ENCODE measurements at regions of chr10 and their contacts with region 1.

Region 1: DNA sequence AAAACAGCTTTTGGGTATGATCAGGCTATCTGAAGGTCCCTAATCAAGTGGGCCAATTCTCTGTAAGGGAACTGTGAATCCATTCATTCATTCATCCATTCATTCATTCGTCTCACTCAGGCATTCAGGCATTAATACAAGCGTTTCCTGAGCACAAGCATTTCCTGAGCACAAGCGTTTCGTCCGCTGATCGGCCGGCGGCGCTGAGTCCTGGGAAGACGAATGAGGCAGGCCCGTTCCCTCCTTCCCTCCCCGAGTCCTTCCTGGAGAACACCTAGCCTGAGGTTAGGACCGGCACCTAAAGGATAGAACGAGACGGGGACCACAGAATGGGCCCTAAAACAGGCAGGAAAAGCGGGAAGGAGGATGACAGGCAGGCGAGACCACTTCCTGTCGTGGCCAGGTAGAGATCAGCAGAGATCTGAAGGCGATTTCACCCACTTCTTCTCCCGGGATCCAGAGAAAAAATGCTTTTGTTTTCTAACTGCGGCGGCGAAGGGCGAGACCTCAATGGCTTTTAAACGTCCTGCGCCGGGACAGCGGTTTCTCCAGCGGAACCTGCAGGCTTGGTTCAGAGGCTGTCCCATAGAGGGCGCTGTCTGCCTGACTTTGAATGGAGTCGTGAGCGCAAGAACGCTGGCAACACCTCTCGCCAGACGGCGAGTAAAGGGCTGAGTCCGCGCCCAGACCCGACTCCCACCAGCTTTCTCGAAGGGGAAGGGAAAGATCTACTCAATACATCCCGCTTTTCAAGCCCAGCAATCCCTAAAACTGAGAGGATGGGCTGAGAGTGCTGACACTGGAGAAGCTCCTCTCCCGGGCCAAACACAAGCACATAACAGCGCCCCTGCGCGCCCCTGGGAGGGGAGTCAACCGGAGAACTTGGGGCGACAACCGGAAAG is 2.9 kb upstream of the HMX3 start:
- DNase-seq: peak; percentile 91
- H3K4me3 ChIP-seq: peak overlapping the region in 1 of 4 donors; percentile 17
- H3K27ac ChIP-seq: no peak overlapping the region
- H3K4me1 ChIP-seq: peaks cover 0 to 53% (median 50%) of the 10 kb centered on the region in 4 donors
- H3K27me3 ChIP-seq: peaks cover 48 to 94% (median 67%) of the 10 kb centered on the region in 3 donors
- CTCF ChIP-seq: peak; percentile 53 to 89 (median 84)
- EP300 ChIP-seq: no peak
- POLR2A ChIP-seq: no peak

Region 2: DNA sequence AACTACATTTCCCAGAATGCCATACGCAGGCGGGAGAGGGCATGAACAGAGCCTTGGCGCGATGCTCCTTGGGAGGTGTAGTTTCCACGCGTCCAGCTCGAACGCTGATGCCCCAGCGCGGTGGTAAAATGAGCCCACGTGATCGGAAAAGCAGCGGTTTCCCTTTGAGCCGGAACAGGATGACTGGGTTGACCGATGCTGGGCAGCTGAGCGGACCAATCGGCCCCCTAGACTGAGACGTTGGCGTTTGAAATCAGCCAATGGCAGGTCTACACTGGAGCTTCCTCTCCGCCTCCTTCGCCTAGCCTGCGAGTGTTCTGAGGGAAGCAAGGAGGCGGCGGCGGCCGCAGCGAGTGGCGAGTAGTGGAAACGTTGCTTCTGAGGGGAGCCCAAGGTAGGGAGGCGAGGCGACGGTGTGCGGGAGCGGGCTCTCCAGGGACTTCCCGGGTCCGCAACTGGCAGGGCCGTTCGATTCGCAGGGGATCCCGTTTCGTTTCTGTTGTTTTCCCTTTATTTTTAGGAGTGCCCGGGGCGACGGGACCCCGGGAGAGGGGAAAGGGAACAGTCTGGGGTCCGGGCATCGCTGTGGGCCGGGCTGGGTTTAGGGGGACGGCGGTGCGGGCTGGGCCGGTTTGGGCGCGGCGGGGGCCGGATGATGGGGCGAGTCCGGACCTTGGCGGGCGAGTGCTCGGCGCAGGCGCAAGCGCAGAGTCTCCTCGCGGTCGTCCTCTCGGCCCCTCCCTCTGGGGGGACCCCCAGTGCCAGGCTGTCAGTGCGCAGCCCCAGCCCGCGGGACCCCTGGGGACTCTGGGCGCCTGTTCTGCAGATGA is 21.5 kb after region 1 on chr10 and contains the start of gene BUB3:
- intact Hi-C with region 1: loop called (anchors 2 kb)
- DNase-seq: peak; percentile 99
- H3K4me3 ChIP-seq: peak within 1 kb of the TSS; percentile 90 to 99 (median 99)
- H3K27ac ChIP-seq: peak within 1 kb of the TSS; percentile 93 to 96 (median 94)
- H3K4me1 ChIP-seq: peaks cover 0 to 45% (median 36%) of the 10 kb centered on the region in 4 donors
- H3K27me3 ChIP-seq: peaks cover 23 to 43% (median 38%) of the 10 kb centered on the region in 3 donors
- CTCF ChIP-seq: peak in 2 of 4 experiments; percentile 19 to 20
- EP300 ChIP-seq: no peak
- POLR2A ChIP-seq: peak; percentile 68 to 82
- total RNA-seq, gene BUB3: 75.6 to 116 (median 101) TPM

Region 3: GRCh38 chr10:123204135-123204478 is 71.3 kb after region 1 on chr10:
- intact Hi-C with region 1: no loop called
- DNase-seq: no peak
- H3K4me3 ChIP-seq: no peak overlapping the region
- H3K27ac ChIP-seq: no peak overlapping the region
- H3K4me1 ChIP-seq: no peaks in the 10 kb centered on the region
- H3K27me3 ChIP-seq: no peaks in the 10 kb centered on the region
- CTCF ChIP-seq: no peak
- EP300 ChIP-seq: no peak
- POLR2A ChIP-seq: no peak

Region 4: GRCh38 chr10:123559066-123559822 is 426.4 kb after region 1 on chr10:
- intact Hi-C with region 1: loop called (anchors 1 kb)
- DNase-seq: peak; percentile 82
- H3K4me3 ChIP-seq: no peak overlapping the region
- H3K27ac ChIP-seq: no peak overlapping the region
- H3K4me1 ChIP-seq: no peaks in the 10 kb centered on the region
- H3K27me3 ChIP-seq: peaks cover 0 to 33% (median 0%) of the 10 kb centered on the region in 3 donors
- CTCF ChIP-seq: peak; percentile 83 to 97 (median 96)
- EP300 ChIP-seq: no peak
- POLR2A ChIP-seq: no peak